IMR-90 (cell line): ENCODE measurements at regions of chr17 and their contacts with region 1.

Region 1: DNA sequence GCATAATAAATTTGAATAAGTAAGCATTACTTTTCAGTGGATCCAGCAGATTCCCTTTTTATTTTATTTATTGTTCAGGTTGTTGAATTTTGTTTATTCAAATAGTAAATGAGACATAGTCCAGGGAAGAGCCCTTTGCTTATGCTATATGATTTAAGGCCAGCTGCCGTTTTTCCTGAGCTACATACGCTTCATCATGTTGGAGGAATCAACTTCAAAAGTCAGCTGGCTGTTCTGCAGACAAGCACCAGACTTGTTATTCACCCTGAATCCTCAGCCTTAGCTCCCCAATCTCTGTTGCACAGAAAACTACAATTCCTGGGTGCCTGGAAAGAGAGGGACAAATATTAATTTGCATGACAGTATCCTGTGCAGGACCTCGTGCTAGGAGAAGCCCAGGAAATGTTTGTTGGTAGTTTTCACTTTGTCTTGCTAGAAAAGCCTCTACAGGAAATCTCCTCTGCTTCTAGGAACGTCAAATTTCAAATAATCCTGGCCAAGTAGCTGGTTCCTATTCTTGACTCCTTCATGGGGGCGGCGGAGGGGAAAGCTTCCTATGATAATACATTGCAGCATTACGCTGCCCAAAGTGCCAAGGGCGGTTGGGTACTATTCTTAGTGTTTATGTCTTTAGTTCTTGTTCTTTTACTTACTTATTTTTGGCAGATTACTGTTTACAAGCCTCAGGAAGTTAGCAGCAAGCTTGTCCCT is 101.6 kb downstream of the PRKCA start:
- DNase-seq: peak; percentile 51
- ATAC-seq: peak; percentile 61; the same call in 1 of the 2 replicates
- H3K4me3 ChIP-seq: no peak overlapping the region
- H3K27ac ChIP-seq: no peak overlapping the region; the same call in 1 of the 2 replicates
- H3K4me1 ChIP-seq: peaks cover 8% of the 10 kb centered on the region
- H3K27me3 ChIP-seq: no peaks in the 10 kb centered on the region
- CTCF ChIP-seq: no peak
- POLR2A ChIP-seq: no peak
- RAD21 ChIP-seq: no peak

Region 2: GRCh38 chr17:66098040-66098439 is 306.0 kb before region 1 on chr17:
- CTCF ChIA-PET with region 1: no interaction called
- POLR2A ChIA-PET with region 1: no interaction called
- dilution Hi-C with region 1: no loop called
- in situ Hi-C with region 1: no loop called
- intact Hi-C with region 1: no loop called
- DNase-seq: peak; percentile 58
- ATAC-seq: peak; percentile 73
- H3K4me3 ChIP-seq: no peak overlapping the region
- H3K27ac ChIP-seq: no peak overlapping the region
- H3K4me1 ChIP-seq: peaks cover 2% of the 10 kb centered on the region; the same call in 1 of the 2 replicates
- H3K27me3 ChIP-seq: no peaks in the 10 kb centered on the region
- CTCF ChIP-seq: no peak
- POLR2A ChIP-seq: no peak
- RAD21 ChIP-seq: no peak

Region 3: GRCh38 chr17:66310528-66311148 is 93.4 kb before region 1 on chr17:
- CTCF ChIA-PET with region 1: no interaction called
- POLR2A ChIA-PET with region 1: no interaction called
- dilution Hi-C with region 1: no loop called
- in situ Hi-C with region 1: no loop called
- intact Hi-C with region 1: loop called (anchors 5 kb)
- DNase-seq: no peak
- ATAC-seq: no peak
- H3K4me3 ChIP-seq: no peak overlapping the region
- H3K27ac ChIP-seq: no peak overlapping the region
- H3K4me1 ChIP-seq: peaks cover 17% of the 10 kb centered on the region
- H3K27me3 ChIP-seq: no peaks in the 10 kb centered on the region
- CTCF ChIP-seq: 0 out of 2 replicates have a peak, but pooled peaks have one; percentile 11
- POLR2A ChIP-seq: no peak
- RAD21 ChIP-seq: no peak

Region 4: DNA sequence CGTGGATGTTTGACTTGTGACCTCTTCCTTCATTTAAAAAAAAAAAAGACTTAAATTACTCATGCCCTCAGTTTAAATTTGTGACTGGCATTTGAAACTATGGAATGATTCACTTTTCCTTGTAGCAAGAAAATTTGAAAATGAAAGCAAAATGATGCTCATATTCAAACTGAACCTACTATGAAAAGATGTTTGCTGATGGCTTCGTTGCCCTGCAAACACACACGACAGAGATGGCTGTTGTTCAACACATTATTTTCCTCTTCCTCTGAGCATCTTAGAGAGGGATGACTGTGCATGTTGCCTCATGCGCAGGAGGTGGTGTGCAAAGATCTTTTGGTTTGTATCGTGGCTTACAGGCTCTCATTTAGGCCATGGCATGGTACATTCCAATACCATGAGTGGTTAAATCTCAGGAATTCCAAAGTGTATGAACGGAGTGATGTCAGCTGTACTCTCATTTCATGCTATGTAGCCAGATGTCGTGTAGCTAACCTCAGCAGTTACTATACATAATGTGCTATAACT is 62.9 kb after region 1 on chr17:
- CTCF ChIA-PET with region 1: no interaction called
- POLR2A ChIA-PET with region 1: no interaction called
- dilution Hi-C with region 1: no loop called
- in situ Hi-C with region 1: no loop called
- intact Hi-C with region 1: no loop called
- DNase-seq: peak; percentile 100
- ATAC-seq: peak; percentile 78
- H3K4me3 ChIP-seq: peak overlapping the region; percentile 18; the same call in 1 of the 2 replicates
- H3K27ac ChIP-seq: peak overlapping the region; percentile 18
- H3K4me1 ChIP-seq: peaks cover 37% of the 10 kb centered on the region
- H3K27me3 ChIP-seq: no peaks in the 10 kb centered on the region
- CTCF ChIP-seq: no peak
- POLR2A ChIP-seq: no peak
- RAD21 ChIP-seq: peak; percentile 23; the same call in 1 of the 2 replicates